Tibial artery (tissue), 4 donors: ENCODE measurements at regions of chr20 and their contacts with region 1.

Region 1: GRCh38 chr20:49009899-49010631 is 36.0 kb upstream of the CSE1L start:
- DNase-seq: no peak
- H3K4me3 ChIP-seq: no peak overlapping the region
- H3K27ac ChIP-seq: no peak overlapping the region
- H3K4me1 ChIP-seq: no peaks in the 10 kb centered on the region
- H3K27me3 ChIP-seq: no peaks in the 10 kb centered on the region
- CTCF ChIP-seq: no peak

Region 2: DNA sequence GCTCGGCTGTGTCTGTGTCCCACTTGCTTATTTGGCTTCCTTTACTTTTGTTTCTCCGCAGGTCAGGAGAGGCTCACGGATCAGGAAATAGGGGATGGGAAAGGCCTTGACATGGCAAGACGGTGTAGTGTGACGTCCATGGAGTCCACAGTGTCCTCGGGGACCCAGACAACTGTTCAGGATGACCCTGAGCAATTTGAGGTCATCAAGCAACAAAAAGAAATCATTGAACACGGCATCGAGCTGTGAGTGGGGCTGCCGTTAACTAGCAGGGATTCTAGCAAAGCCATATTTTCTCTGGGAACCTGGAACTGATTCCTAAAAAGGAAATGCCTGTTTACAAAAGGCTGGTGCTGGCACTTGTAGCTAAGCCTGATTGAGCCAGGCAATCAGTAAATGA is 34.1 kb before region 1 on chr20:
- intact Hi-C with region 1: no loop called
- DNase-seq: no peak
- H3K4me3 ChIP-seq: no peak overlapping the region
- H3K27ac ChIP-seq: no peak overlapping the region
- H3K4me1 ChIP-seq: no peaks in the 10 kb centered on the region
- H3K27me3 ChIP-seq: no peaks in the 10 kb centered on the region
- CTCF ChIP-seq: no peak

Region 3: DNA sequence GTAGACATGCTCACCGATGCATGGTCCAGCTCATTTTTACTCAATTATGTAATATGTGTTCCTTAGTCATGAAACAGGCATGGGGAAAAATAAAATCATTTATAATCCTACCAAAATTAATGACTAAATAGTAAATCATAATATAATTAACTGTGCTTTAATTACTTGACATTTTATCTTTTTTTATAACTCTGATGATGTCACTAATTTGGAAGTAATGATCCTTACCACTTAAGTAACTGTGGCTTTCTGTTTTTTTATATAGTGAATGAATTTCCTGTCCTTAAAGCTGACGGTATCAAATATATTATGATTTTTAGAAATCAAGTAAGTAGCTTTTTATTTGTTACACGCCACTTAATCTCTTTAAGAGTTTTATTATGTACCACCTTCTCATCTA is 68.2 kb after region 1 on chr20:
- intact Hi-C with region 1: loop called (anchors 10 kb)
- DNase-seq: no peak
- H3K4me3 ChIP-seq: no peak overlapping the region
- H3K27ac ChIP-seq: no peak overlapping the region
- H3K4me1 ChIP-seq: no peaks in the 10 kb centered on the region
- H3K27me3 ChIP-seq: no peaks in the 10 kb centered on the region
- CTCF ChIP-seq: no peak